SK-N-SH (cell line): ENCODE measurements at regions of chr11 and their contacts with region 1.

Region 1: GRCh38 chr11:66677599-66678375 is at the start of gene RBM4B:
- DNase-seq: peak; percentile 98
- H3K4me3 ChIP-seq: peak within 1 kb of the TSS; percentile 60 to 63
- H3K27ac ChIP-seq: peak within 1 kb of the TSS; percentile 92 to 97
- H3K4me1 ChIP-seq: peaks cover 18 to 21% of the 10 kb centered on the region in 2 experiments
- H3K27me3 ChIP-seq: no peaks in the 10 kb centered on the region
- CTCF ChIP-seq: no peak
- EP300 ChIP-seq: no peak
- RAD21 ChIP-seq: no peak
- polyA plus RNA-seq, gene RBM4B: 31.1 and 43.3 TPM in 2 replicates

Region 2: DNA sequence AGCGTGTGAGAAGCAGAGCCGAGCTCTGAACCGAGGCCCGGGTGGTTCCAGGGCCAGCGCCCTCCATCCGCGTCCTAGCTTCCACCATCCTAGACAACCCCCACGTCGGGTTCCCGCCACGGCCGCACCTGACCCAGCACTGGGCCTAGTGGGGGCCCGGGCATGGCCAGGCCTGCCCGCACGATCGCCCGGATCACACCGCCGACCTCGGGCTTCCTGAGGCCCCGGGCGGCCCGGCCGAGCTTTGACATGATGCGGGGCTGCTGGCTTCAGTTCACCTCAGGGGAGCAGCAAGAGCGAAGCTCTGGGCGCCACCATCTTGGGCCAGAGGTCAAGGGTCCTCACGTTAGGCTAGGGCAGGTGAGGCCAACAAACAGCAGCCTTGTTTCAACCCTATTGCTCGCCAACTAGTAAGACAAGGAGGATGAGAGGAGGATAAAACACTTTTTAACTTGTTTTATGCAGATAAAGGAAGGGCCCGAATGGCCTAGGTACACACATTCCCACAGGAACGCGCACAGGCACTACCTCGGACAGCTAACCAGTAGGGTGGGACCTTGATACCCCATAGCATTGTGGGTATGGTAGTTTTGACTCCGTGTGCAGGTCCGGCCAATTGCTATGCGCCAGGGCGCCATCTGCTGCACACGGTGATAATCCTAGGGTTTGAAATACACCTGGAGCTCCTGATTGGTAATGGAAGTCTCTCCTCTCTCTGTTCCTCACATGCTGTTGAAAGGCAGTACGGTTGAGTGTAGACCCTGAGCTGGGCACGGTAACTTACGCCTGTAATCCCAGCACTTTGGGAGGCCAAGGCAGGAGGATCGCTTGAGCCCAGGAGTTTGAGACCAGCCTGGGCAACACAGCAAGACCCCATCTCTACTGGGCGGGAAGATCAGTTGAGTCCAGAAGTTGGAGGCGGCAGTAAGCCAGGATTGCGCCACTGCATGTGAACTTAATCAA is 239.0 kb before region 1 on chr11 and contains the start of gene MRPL11:
- CTCF ChIA-PET with region 1: interaction called, 22 read pairs
- POLR2A ChIA-PET with region 1: no interaction called
- DNase-seq: peak; percentile 98
- H3K4me3 ChIP-seq: peak within 1 kb of the TSS; percentile 78 to 87
- H3K27ac ChIP-seq: peak within 1 kb of the TSS; percentile 63 to 91
- H3K4me1 ChIP-seq: peaks cover 0 to 5% of the 10 kb centered on the region in 2 experiments; a peak in 1 of 4 replicates
- H3K27me3 ChIP-seq: peaks cover 20% of the 10 kb centered on the region; the same call in 1 of the 2 replicates
- CTCF ChIP-seq: peak; percentile 74
- EP300 ChIP-seq: no peak
- RAD21 ChIP-seq: peak; percentile 55
- polyA plus RNA-seq, gene MRPL11: 33.9 and 45.6 TPM in 2 replicates

Region 3: GRCh38 chr11:66561178-66561974 is 116.4 kb before region 1 on chr11:
- CTCF ChIA-PET with region 1: interaction called, 30 read pairs
- POLR2A ChIA-PET with region 1: interaction called, 3 read pairs
- DNase-seq: no peak
- H3K4me3 ChIP-seq: no peak overlapping the region
- H3K27ac ChIP-seq: no peak overlapping the region
- H3K4me1 ChIP-seq: no peaks in the 10 kb centered on the region; a peak in 1 of 4 replicates
- H3K27me3 ChIP-seq: no peaks in the 10 kb centered on the region
- CTCF ChIP-seq: no peak
- EP300 ChIP-seq: no peak
- RAD21 ChIP-seq: no peak

Region 4: DNA sequence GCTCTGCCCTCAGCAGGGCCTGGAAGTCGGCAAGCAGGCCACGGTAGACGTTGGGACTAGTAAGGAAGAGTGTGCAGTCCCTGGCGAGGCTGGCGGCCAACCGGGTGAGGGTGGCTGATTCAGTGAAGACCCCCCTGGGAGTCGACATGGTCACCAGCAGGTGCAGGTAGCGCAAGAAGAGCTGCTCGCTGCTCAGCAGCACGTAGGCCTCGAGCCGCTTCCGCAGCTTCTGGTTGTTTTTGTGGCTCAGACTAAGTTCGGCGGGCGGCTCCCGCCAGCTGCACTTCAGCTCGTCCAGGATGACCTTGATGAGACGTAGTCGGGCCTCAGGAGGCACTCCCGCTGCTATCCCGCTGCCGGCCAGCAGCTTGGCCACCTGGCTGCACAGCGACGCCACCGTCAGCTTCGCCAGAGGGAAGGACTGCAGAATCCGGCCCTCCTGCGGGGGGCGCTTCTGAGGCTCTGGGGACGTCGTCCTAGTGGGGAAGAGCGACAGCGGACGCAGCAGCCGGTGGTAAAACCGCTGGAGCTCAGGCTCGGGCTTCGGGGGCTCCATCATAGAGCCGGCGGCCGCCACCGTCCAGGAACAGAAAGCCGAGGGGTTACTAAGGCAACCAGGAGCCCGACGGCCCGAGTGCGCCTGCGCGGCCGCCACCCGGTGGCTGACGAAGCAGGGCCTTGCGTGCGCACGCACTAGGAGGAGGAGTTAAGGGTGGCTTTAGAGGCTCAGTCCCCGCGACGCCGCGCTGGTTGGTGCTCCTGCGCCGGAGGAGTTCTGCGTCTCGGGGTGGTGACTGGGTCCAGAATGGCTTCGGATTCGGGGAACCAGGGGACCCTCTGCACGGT is 85.1 kb before region 1 on chr11 and contains the starts of genes CCDC87 and CCS:
- CTCF ChIA-PET with region 1: interaction called, 14 read pairs
- POLR2A ChIA-PET with region 1: no interaction called
- DNase-seq: peak; percentile 100
- H3K4me3 ChIP-seq: peak within 1 kb of the TSS; percentile 77 to 94
- H3K27ac ChIP-seq: peak within 1 kb of the TSS; percentile 62 to 84; a peak in 3 of 4 replicates
- H3K4me1 ChIP-seq: peaks cover 4 to 17% of the 10 kb centered on the region in 2 experiments; a peak in 1 of 4 replicates
- H3K27me3 ChIP-seq: no peaks in the 10 kb centered on the region
- CTCF ChIP-seq: peak; percentile 57
- EP300 ChIP-seq: no peak
- RAD21 ChIP-seq: no peak
- polyA plus RNA-seq, gene CCDC87: 0.06 and 0.21 TPM in 2 replicates
- polyA plus RNA-seq, gene CCS: 54.7 and 56.1 TPM in 2 replicates

Region 5: GRCh38 chr11:66688561-66689534 is 11.1 kb after region 1 on chr11:
- CTCF ChIA-PET with region 1: interaction called, 26 read pairs
- POLR2A ChIA-PET with region 1: no interaction called
- DNase-seq: peak; percentile 14
- H3K4me3 ChIP-seq: no peak overlapping the region
- H3K27ac ChIP-seq: no peak overlapping the region
- H3K4me1 ChIP-seq: peaks cover 0 to 15% of the 10 kb centered on the region in 2 experiments; a peak in 1 of 4 replicates
- H3K27me3 ChIP-seq: no peaks in the 10 kb centered on the region
- CTCF ChIP-seq: no peak
- EP300 ChIP-seq: no peak
- RAD21 ChIP-seq: no peak

Region 6: GRCh38 chr11:66717925-66718319 is 40.1 kb after region 1 on chr11:
- CTCF ChIA-PET with region 1: no interaction called
- POLR2A ChIA-PET with region 1: no interaction called
- DNase-seq: no peak
- H3K4me3 ChIP-seq: no peak overlapping the region
- H3K27ac ChIP-seq: no peak overlapping the region
- H3K4me1 ChIP-seq: peaks cover 6 to 10% of the 10 kb centered on the region in 2 experiments; a peak in 3 of 4 replicates
- H3K27me3 ChIP-seq: no peaks in the 10 kb centered on the region
- CTCF ChIP-seq: no peak
- EP300 ChIP-seq: no peak
- RAD21 ChIP-seq: no peak

Region 7: DNA sequence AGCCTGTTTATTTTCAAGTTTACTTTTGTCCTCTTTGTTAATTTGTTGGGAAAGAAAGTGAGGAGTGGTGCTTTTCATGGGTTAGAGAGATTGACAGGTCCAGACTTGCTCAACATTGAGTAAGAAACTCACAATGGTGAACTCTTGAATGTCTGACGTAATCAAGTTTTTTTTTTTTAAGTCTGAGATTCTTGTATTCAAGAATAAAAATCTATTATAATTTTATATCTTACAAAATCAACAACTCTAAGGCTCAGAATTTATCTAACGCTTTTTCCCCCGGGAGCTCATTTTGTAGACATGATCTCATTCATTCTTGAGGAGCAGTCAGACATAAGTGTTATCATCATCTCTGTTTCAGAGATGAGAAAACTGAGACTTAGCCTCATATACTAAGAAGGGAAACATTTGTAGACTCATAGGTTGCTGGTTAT is 90.3 kb after region 1 on chr11:
- CTCF ChIA-PET with region 1: no interaction called
- POLR2A ChIA-PET with region 1: no interaction called
- DNase-seq: no peak
- H3K4me3 ChIP-seq: no peak overlapping the region
- H3K27ac ChIP-seq: no peak overlapping the region
- H3K4me1 ChIP-seq: no peaks in the 10 kb centered on the region
- H3K27me3 ChIP-seq: no peaks in the 10 kb centered on the region
- CTCF ChIP-seq: no peak
- EP300 ChIP-seq: no peak
- RAD21 ChIP-seq: no peak